Caco-2 (cell line): ENCODE measurements at regions of chr6 and their contacts with region 1.

Region 1: GRCh38 chr6:38871741-38872568 is 156.8 kb downstream of the DNAH8 start:
- DNase-seq: peak; percentile 49 to 72
- H3K4me3 ChIP-seq: no peak overlapping the region
- H3K4me3 Mint-ChIP-seq: no peak overlapping the region
- H3K27ac Mint-ChIP-seq: no peak overlapping the region
- H3K4me1 ChIP-seq: no peaks in the 10 kb centered on the region
- H3K4me1 Mint-ChIP-seq: no peaks in the 10 kb centered on the region
- H3K27me3 ChIP-seq: no peaks in the 10 kb centered on the region
- H3K27me3 Mint-ChIP-seq: peaks cover 6% of the 10 kb centered on the region
- CTCF ChIP-seq: peak; percentile 73 to 93

Region 2: GRCh38 chr6:38797391-38797790 is 74.6 kb before region 1 on chr6:
- CTCF ChIA-PET with region 1: no interaction called
- POLR2A ChIA-PET with region 1: no interaction called
- intact Hi-C with region 1: loop called (anchors 5 kb)
- DNase-seq: peak in 1 of 2 experiments; percentile 53
- H3K4me3 ChIP-seq: no peak overlapping the region
- H3K4me3 Mint-ChIP-seq: peak overlapping the region; percentile 69
- H3K27ac Mint-ChIP-seq: peak overlapping the region; percentile 93
- H3K4me1 ChIP-seq: peaks cover 34% of the 10 kb centered on the region
- H3K4me1 Mint-ChIP-seq: peaks cover 45% of the 10 kb centered on the region
- H3K27me3 ChIP-seq: no peaks in the 10 kb centered on the region
- H3K27me3 Mint-ChIP-seq: no peaks in the 10 kb centered on the region
- CTCF ChIP-seq: no peak

Region 3: DNA sequence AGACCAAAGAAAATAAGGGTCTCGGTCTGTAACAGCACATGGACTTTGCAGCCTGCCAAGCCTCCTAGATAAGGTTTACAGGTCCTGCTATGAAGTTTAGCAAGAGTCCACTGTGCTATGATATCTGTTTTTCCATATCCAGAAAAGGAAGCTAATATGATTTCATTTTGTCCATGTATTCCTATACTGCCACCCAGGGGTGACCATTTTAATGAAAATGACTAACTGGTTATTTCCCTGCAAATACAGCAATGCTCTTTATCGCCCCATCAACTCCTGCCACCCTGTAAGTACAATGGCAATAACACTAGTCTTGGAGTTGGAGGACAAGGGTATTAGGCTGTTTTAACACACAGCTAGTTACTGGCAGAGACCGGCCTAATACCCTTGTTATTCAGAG is 61.5 kb after region 1 on chr6:
- CTCF ChIA-PET with region 1: no interaction called
- POLR2A ChIA-PET with region 1: no interaction called
- intact Hi-C with region 1: loop called (anchors 1 kb)
- DNase-seq: peak in 1 of 2 experiments; percentile 47
- H3K4me3 ChIP-seq: no peak overlapping the region
- H3K4me3 Mint-ChIP-seq: no peak overlapping the region
- H3K27ac Mint-ChIP-seq: no peak overlapping the region
- H3K4me1 ChIP-seq: no peaks in the 10 kb centered on the region
- H3K4me1 Mint-ChIP-seq: no peaks in the 10 kb centered on the region
- H3K27me3 ChIP-seq: no peaks in the 10 kb centered on the region
- H3K27me3 Mint-ChIP-seq: peaks cover 15% of the 10 kb centered on the region
- CTCF ChIP-seq: no peak

Region 4: GRCh38 chr6:39157511-39157910 is 285.6 kb after region 1 on chr6:
- CTCF ChIA-PET with region 1: no interaction called
- POLR2A ChIA-PET with region 1: no interaction called
- intact Hi-C with region 1: loop called (anchors 5 kb)
- DNase-seq: no peak
- H3K4me3 ChIP-seq: no peak overlapping the region
- H3K4me3 Mint-ChIP-seq: no peak overlapping the region
- H3K27ac Mint-ChIP-seq: no peak overlapping the region
- H3K4me1 ChIP-seq: no peaks in the 10 kb centered on the region
- H3K4me1 Mint-ChIP-seq: peaks cover 7% of the 10 kb centered on the region
- H3K27me3 ChIP-seq: no peaks in the 10 kb centered on the region
- H3K27me3 Mint-ChIP-seq: peaks cover under 1% of the 10 kb centered on the region
- CTCF ChIP-seq: no peak

Region 5: GRCh38 chr6:39309942-39310531 is 438.1 kb after region 1 on chr6:
- CTCF ChIA-PET with region 1: no interaction called
- POLR2A ChIA-PET with region 1: no interaction called
- intact Hi-C with region 1: loop called (anchors 1 kb)
- DNase-seq: peak; percentile 74 to 85
- H3K4me3 ChIP-seq: no peak overlapping the region
- H3K4me3 Mint-ChIP-seq: no peak overlapping the region
- H3K27ac Mint-ChIP-seq: no peak overlapping the region
- H3K4me1 ChIP-seq: no peaks in the 10 kb centered on the region
- H3K4me1 Mint-ChIP-seq: no peaks in the 10 kb centered on the region
- H3K27me3 ChIP-seq: peaks cover 7% of the 10 kb centered on the region
- H3K27me3 Mint-ChIP-seq: peaks cover 12% of the 10 kb centered on the region
- CTCF ChIP-seq: peak; percentile 92